Calu3 (cell line): ENCODE measurements at regions of chr5 and their contacts with region 1.

Region 1: DNA sequence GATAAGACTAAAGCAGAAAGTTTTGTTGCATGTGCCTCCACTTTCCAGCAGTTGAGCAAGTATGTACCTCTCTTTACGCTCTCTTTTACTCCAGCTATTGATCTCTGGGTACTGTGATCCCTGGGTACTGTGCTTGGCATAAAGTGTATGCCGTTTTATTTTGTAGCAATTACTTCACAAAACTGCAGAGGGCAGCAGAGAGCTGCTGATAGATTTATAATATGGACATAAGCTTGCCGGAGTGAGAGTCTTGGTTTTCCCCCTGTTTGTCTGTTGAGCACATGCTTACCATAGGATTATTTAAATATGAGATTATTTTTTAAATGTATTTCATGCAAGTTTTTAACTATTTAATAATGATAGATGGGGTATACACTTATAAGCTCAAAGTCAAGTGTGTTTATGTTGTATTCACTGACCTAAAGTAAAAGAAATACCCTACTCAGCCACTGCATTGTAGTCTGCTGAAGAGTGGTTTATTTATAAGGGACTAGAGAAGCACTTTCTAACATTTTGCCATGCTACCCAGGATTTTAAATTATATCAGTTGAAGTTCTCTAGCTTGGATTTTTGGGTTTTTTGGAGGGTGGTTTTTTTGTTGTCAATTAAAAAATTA is 13.0 kb downstream of the TTC1 start:
- DNase-seq: peak; percentile 73
- H3K4me3 Mint-ChIP-seq: no peak overlapping the region
- H3K27ac Mint-ChIP-seq: peak overlapping the region; percentile 17
- H3K4me1 Mint-ChIP-seq: peaks cover 10% of the 10 kb centered on the region
- H3K27me3 Mint-ChIP-seq: no peaks in the 10 kb centered on the region
- CTCF ChIP-seq: peak; percentile 76

Region 2: GRCh38 chr5:160008877-160009590 is 12.9 kb before region 1 on chr5 and contains the start of gene TTC1:
- CTCF ChIA-PET with region 1: interaction called, 13 read pairs
- intact Hi-C with region 1: no loop called
- DNase-seq: peak; percentile 93
- H3K4me3 Mint-ChIP-seq: peak within 1 kb of the TSS; percentile 93
- H3K27ac Mint-ChIP-seq: peak within 1 kb of the TSS; percentile 100
- H3K4me1 Mint-ChIP-seq: peaks cover 22% of the 10 kb centered on the region
- H3K27me3 Mint-ChIP-seq: no peaks in the 10 kb centered on the region
- CTCF ChIP-seq: no peak
- total RNA-seq, gene TTC1: 66.4 and 70.6 TPM in 2 replicates

Region 3: GRCh38 chr5:160071516-160071915 is 49.6 kb after region 1 on chr5:
- CTCF ChIA-PET with region 1: no interaction called
- intact Hi-C with region 1: no loop called
- DNase-seq: no peak
- H3K4me3 Mint-ChIP-seq: no peak overlapping the region
- H3K27ac Mint-ChIP-seq: no peak overlapping the region
- H3K4me1 Mint-ChIP-seq: no peaks in the 10 kb centered on the region
- H3K27me3 Mint-ChIP-seq: no peaks in the 10 kb centered on the region
- CTCF ChIP-seq: no peak

Region 4: DNA sequence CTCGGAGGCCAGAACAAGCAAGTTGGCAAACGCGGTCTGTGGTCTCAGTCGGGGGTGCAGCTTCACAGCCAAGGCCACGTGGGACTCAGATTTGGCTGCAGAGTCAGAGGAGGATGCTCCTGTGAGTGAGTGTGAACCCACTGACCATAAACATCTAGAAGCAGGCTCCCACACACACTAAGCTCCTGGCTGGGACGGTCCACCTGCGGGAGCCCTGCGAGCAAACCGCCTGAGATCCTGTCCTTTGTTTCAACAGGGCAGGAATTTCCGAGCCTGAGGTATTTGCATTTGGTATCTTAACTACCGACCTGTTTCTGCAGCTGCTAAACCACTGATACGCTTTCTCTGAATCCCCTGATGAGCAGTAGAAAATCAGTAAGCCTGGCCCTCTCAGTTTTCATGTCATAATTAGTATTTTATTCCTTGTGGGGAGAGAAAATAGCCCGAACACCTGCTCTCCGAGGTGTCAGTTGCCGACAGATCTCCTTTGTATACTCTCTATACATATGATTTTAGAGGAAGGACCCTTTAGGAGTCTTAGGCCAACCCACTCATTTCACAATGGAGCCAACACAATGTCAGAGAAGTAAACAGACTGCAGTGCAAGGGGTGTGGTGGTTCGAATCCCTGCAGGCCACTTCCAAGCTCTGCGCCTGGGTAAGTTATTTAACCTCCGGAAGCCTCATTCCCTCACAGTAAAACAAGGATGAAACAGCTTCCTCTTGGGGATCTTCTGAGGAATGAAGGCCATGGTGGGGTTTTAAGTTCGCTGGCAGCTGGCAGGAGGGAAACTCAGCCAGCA is 138.3 kb after region 1 on chr5:
- CTCF ChIA-PET with region 1: no interaction called
- intact Hi-C with region 1: loop called (anchors 5 kb)
- DNase-seq: no peak
- H3K4me3 Mint-ChIP-seq: no peak overlapping the region
- H3K27ac Mint-ChIP-seq: no peak overlapping the region
- H3K4me1 Mint-ChIP-seq: peaks cover 20% of the 10 kb centered on the region
- H3K27me3 Mint-ChIP-seq: no peaks in the 10 kb centered on the region
- CTCF ChIP-seq: no peak

Region 5: GRCh38 chr5:160266752-160267345 is 244.9 kb after region 1 on chr5:
- CTCF ChIA-PET with region 1: no interaction called
- intact Hi-C with region 1: no loop called
- DNase-seq: no peak
- H3K4me3 Mint-ChIP-seq: no peak overlapping the region
- H3K27ac Mint-ChIP-seq: no peak overlapping the region
- H3K4me1 Mint-ChIP-seq: peaks cover 28% of the 10 kb centered on the region
- H3K27me3 Mint-ChIP-seq: no peaks in the 10 kb centered on the region
- CTCF ChIP-seq: no peak

Region 6: GRCh38 chr5:160357861-160358411 is 336.0 kb after region 1 on chr5:
- CTCF ChIA-PET with region 1: no interaction called
- intact Hi-C with region 1: no loop called
- DNase-seq: no peak
- H3K4me3 Mint-ChIP-seq: no peak overlapping the region
- H3K27ac Mint-ChIP-seq: no peak overlapping the region
- H3K4me1 Mint-ChIP-seq: no peaks in the 10 kb centered on the region
- H3K27me3 Mint-ChIP-seq: peaks cover 20% of the 10 kb centered on the region
- CTCF ChIP-seq: no peak

Region 7: DNA sequence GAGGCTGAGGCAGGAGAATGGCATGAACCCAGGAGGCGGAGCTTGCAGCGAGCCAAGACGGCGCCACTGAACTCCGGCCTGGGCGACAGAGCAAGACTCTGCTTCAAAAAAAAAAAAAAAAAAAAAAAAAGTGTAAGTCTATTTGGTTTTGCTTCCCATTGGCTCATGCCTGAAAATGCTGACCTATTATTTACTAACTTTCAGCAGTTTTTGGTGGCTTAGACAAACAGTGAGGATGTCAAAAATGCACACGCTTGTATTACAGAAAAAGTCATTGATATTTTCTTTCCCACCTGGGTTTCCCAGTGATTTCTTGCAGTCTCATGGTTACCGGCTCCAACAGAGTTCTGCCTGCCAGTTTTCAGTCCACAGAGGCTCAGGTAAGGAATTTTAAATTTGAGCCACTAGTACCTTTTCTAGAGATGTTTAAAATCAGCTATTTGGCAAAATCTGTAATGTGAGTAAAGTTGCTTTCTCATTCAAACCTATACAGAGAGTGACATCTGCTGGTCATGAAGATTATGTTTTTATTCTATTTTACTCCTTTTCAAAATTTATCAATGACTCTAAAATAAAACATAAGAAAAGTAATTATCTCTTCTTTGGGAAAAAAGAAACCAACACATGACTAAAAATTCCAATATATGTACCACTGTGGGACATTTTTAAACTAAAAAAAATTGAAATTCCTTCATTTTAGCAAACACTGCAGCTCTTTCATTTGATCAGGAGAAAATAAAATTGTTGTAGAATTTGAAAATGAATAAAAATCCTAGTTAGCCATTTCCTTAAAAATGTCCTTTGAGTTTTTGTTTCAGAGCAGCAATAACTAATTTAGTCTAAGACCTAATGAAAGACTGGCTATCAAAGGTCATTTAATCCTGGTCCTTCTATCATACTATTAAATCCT is 369.1 kb after region 1 on chr5:
- CTCF ChIA-PET with region 1: interaction called, 27 read pairs
- intact Hi-C with region 1: loop called (anchors 1 kb)
- DNase-seq: no peak
- H3K4me3 Mint-ChIP-seq: no peak overlapping the region
- H3K27ac Mint-ChIP-seq: no peak overlapping the region
- H3K4me1 Mint-ChIP-seq: no peaks in the 10 kb centered on the region
- H3K27me3 Mint-ChIP-seq: no peaks in the 10 kb centered on the region
- CTCF ChIP-seq: no peak

Region 8: GRCh38 chr5:160565376-160565775 is 543.4 kb after region 1 on chr5:
- CTCF ChIA-PET with region 1: no interaction called
- intact Hi-C with region 1: no loop called
- DNase-seq: no peak
- H3K4me3 Mint-ChIP-seq: no peak overlapping the region
- H3K27ac Mint-ChIP-seq: no peak overlapping the region
- H3K4me1 Mint-ChIP-seq: no peaks in the 10 kb centered on the region
- H3K27me3 Mint-ChIP-seq: no peaks in the 10 kb centered on the region
- CTCF ChIP-seq: no peak